ENCODE measurements at regions of chr16 and their contacts with region 1.

Region 1: GRCh38 chr16:11797166-11797956 is at the start of gene ZC3H7A:
- DNase-seq: peak; percentile 88 to 98 (median 96)

Region 2: DNA sequence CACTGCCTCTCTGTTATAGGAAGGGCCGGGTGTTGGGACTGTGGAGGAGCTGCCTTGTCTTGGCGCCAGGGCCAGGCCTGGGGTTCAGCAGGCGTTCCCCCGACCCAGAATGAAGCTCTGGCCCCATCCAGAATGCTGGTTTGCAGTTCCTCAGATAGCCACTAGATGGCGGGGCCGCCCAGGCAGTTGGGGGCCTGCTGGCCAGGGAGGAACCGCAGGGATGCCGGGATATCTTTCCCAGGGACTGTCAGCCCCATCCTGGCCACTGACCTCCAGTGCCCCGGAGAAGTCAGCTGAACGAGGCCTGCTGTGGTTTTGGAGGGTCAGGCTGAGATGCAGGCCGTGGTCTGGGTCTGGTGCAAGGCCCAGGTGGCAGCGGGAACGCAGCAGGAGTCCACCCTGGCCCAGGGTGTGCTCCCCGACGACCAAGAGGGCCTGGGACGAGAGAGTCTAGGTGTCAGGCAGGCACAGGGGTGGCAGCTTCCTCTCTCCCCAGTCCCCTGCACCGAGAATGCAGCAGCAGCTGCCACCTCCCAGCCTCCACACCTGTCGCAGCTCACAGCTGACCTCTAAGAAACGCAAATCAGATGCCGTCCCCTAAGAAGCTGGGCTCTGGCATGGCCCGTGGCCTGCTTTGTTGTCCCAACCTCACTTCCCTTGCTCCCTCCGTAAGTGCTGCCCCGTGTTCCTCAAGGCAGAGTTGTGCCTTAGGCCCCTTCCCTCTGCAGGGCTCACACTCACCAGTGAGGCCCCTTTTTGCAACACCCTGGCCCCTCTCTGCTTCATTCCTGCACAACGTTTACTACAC is 400.9 kb before region 1 on chr16:
- intact Hi-C with region 1: loop called (anchors 10 kb)
- DNase-seq: peak; percentile 55 to 93 (median 83)

Region 3: GRCh38 chr16:11742539-11743307 is 54.6 kb before region 1 on chr16 and contains the start of gene TXNDC11:
- intact Hi-C with region 1: loop called (anchors 2 kb)
- DNase-seq: peak; percentile 96 to 100 (median 100)

Region 4: DNA sequence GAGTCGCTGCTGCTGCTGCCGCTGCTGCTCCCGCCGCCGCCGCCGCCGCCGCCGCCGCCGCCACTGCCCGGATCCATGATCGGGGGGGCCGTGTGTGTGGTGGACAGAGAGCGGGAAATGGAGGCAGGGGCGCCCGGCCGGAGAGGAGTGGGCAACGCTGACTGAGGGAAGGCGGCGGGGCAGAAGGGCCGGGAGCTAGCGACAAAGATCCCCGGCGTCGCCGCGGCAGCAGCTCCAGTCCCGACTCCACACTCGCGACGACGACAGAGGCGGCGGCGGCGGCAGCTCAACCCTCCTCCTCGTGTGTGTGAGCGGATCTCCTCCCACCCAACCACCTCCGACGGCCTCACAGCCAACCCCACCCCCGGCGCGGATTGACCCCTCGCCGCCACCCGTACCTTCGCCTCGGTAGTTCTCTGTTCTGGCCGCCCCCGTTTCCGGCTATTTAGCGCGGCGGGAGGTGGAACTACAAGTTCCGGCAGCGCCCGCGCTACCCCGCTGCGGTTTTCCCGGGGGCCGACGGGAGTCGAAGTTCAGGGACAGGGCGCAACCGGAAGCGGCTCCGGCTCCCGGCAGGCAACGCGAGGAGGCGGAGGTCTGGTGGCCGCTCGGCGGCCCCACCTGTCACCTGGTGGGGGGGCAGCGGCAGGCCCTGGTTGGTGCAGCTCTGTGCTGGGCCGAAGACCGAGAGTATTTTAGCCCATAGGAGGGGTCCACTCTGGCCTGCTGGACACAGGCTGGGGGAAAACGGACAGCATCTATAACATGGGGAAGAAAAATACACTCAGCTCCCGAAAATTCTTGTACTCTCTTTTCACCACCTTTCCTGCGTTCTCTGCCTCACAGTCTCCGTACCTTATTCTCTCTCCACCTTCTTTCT is 118.5 kb after region 1 on chr16 and contains the start of gene GSPT1:
- intact Hi-C with region 1: loop called (anchors 10 kb)
- DNase-seq: peak; percentile 95 to 100 (median 98)

Measured in head of caudate nucleus (tissue), 42 donors.